Activated CD4-positive, alpha-beta T cell treated with anti-CD3 and anti-CD28 coated beads for 36 hours (primary cell): ENCODE measurements at regions of chr10 and their contacts with region 1.

Region 1: DNA sequence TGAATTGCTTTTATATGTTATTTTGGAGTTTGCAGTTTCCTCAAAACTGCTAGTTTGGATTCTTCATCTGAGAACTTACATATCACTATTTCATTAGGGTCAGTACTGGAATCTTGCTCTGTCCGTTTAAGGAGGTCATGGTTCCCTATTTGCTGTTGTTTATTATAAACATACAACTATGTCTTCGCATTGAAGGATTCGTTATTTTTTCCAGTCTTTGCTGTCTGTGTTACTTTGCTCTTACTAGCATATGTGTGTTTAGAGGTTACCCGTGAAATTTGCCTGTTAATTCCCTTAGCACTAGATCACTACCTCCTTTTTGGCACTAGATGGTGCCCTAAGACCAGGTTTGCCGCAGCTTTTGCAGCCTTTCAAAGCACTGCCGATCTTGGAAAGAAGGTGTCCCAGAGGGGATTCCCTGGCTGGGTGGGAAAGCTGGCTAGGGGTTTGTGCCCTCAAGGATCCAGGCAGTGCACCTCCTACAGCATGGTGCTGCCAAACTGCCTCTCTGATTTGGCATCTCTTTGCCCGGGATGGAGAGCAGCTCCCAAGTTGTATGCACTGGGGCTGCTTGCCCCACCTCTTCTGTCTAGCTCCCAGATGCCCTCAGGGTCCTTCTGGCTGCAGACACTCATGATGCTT is 103.1 kb upstream of the APBB1IP start:
- DNase-seq: peak; percentile 73
- ATAC-seq: peak; percentile 95
- H3K4me3 Mint-ChIP-seq: peak overlapping the region; percentile 60
- H3K27ac Mint-ChIP-seq: peak overlapping the region; percentile 68
- H3K4me1 Mint-ChIP-seq: peaks cover 10% of the 10 kb centered on the region
- H3K27me3 Mint-ChIP-seq: no peaks in the 10 kb centered on the region

Region 2: DNA sequence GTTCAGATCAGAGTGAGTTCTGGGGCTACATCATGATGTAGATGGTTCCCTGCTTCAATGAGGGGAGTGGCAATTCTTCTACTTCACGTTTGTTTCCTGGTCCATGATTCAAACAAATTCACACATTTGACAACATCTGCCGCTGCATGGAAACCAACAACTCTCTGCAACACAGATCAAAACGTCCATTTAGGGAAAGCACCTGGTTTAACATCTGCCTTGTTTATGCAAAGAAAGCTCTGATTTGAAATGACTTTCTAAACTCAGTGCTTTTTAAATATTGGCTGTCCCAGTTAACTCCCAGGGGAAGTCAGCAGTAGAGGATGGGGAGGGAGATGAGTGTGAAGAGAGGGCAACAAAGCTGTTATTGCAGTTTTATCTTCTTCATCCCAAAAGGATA is 24.7 kb before region 1 on chr10:
- CTCF ChIA-PET with region 1: no interaction called
- POLR2A ChIA-PET with region 1: no interaction called
- intact Hi-C with region 1: no loop called
- DNase-seq: no peak
- ATAC-seq: no peak
- H3K4me3 Mint-ChIP-seq: no peak overlapping the region
- H3K27ac Mint-ChIP-seq: no peak overlapping the region
- H3K4me1 Mint-ChIP-seq: no peaks in the 10 kb centered on the region
- H3K27me3 Mint-ChIP-seq: peaks cover 21% of the 10 kb centered on the region

Region 3: GRCh38 chr10:26437637-26438461 is 102.8 kb after region 1 on chr10 and contains the start of gene APBB1IP:
- CTCF ChIA-PET with region 1: interaction called, 6 read pairs
- POLR2A ChIA-PET with region 1: no interaction called
- intact Hi-C with region 1: loop called in 1 of 2 experiments (anchors 5 kb)
- DNase-seq: peak; percentile 73
- ATAC-seq: peak; percentile 56
- H3K4me3 Mint-ChIP-seq: peak within 1 kb of the TSS; percentile 89
- H3K27ac Mint-ChIP-seq: peak within 1 kb of the TSS; percentile 97
- H3K4me1 Mint-ChIP-seq: peaks cover 49% of the 10 kb centered on the region
- H3K27me3 Mint-ChIP-seq: no peaks in the 10 kb centered on the region
- total RNA-seq, gene APBB1IP: 53.3 to 66.4 TPM

Region 4: DNA sequence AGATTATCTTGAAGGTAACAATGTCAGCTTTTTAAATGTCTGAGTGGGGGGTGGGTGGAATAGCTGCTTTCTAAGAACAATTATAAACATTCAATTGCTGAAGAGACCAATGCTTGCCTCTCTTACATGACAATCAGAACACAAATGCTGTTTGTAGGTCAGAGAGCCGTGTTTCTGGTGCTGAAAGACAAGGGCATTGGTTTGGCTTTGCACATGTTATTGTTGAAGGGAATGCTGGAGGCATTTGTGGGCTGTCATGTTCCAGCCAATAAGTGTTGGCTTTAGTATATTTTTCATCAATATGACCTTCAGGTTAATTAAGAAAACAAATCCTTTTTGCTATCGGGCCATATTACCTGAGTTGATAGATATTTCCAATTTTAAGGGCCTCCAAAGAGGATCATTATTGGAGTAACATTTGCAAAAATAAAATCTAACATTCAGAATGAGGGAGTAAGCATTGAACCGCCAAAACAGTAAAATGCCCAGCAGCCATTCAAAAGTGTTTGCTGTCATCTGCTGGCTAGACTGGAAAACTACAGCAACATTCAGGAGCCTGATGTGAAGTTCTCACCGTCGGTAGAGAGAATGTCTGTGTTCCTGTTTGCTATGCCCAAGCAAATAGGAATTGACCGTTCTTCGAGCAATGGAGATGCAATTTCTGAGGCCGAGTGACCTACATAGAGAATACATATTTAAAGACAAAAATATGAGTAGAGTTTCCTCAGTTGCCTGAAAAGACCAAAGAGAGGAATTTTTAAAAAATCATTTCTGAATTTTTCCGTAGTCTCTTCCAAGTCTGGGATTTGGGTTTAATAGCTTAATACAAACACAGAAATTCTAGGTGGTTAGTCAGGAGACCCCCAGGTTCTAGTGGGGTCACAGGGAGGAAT is 221.9 kb after region 1 on chr10:
- CTCF ChIA-PET with region 1: interaction called, 105 read pairs
- POLR2A ChIA-PET with region 1: no interaction called
- intact Hi-C with region 1: loop called (anchors 1 kb)
- DNase-seq: peak; percentile 44
- ATAC-seq: peak; percentile 53
- H3K4me3 Mint-ChIP-seq: no peak overlapping the region
- H3K27ac Mint-ChIP-seq: no peak overlapping the region
- H3K4me1 Mint-ChIP-seq: peaks cover 5% of the 10 kb centered on the region
- H3K27me3 Mint-ChIP-seq: no peaks in the 10 kb centered on the region

Region 5: GRCh38 chr10:26682931-26683330 is 347.9 kb after region 1 on chr10:
- CTCF ChIA-PET with region 1: no interaction called
- POLR2A ChIA-PET with region 1: no interaction called
- intact Hi-C with region 1: loop called in 1 of 2 experiments (anchors 5 kb)
- DNase-seq: no peak
- ATAC-seq: no peak
- H3K4me3 Mint-ChIP-seq: no peak overlapping the region
- H3K27ac Mint-ChIP-seq: peak overlapping the region; percentile 63
- H3K4me1 Mint-ChIP-seq: peaks cover 27% of the 10 kb centered on the region
- H3K27me3 Mint-ChIP-seq: no peaks in the 10 kb centered on the region

Region 6: DNA sequence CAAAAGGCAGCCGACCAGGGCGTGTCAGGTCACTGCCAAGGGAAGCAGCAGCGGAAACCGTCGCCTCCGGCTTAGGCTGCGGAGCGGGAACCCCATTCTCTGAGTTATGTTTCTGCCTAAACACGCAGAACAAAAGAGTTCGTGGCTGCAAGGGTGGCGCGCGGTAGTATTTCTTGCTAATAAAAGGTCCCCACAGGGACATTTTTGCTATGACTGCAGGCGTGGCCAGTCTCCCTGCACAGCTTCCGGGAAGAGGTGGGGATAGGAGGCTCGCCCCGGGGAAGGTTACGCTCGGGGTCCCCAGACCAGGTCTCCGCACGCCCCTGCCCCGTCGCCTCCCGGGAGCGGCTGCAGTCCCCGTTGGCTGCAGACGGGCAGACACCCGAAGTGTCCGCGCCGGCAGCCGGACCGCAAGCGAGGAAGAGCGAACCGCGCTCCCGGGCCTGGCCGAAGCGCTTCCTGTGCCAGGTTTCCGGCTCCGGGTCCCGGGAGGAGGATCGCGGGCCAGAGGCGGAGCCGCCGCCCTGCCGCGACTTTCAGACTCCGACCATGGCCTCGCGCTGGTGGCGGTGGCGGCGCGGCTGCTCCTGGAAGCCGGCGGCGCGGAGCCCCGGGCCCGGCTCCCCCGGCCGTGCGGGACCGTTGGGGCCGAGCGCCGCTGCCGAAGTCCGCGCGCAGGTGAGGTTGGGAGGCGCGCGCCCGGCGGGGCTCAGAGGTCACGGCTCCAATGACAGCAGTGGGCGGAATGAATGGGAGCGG is 362.3 kb after region 1 on chr10 and contains the start of gene PDSS1:
- CTCF ChIA-PET with region 1: no interaction called
- POLR2A ChIA-PET with region 1: no interaction called
- intact Hi-C with region 1: loop called (anchors 2 to 10 kb)
- DNase-seq: peak; percentile 79
- ATAC-seq: peak; percentile 78
- H3K4me3 Mint-ChIP-seq: peak within 1 kb of the TSS; percentile 91
- H3K27ac Mint-ChIP-seq: peak within 1 kb of the TSS; percentile 95
- H3K4me1 Mint-ChIP-seq: peaks cover 32% of the 10 kb centered on the region
- H3K27me3 Mint-ChIP-seq: no peaks in the 10 kb centered on the region
- total RNA-seq, gene PDSS1: 16.1 to 20.7 TPM

Region 7: GRCh38 chr10:26881600-26882331 is 546.7 kb after region 1 on chr10:
- CTCF ChIA-PET with region 1: interaction called, 5 read pairs
- POLR2A ChIA-PET with region 1: no interaction called
- intact Hi-C with region 1: loop called (anchors 1 kb)
- DNase-seq: no peak
- ATAC-seq: peak; percentile 95
- H3K4me3 Mint-ChIP-seq: no peak overlapping the region
- H3K27ac Mint-ChIP-seq: no peak overlapping the region
- H3K4me1 Mint-ChIP-seq: no peaks in the 10 kb centered on the region
- H3K27me3 Mint-ChIP-seq: peaks cover 8% of the 10 kb centered on the region

Region 8: GRCh38 chr10:27360581-27361172 is 1025.6 kb after region 1 on chr10:
- CTCF ChIA-PET with region 1: no interaction called
- POLR2A ChIA-PET with region 1: no interaction called
- intact Hi-C with region 1: loop called in 1 of 2 experiments (anchors 10 kb)
- DNase-seq: peak; percentile 91
- ATAC-seq: peak; percentile 96
- H3K4me3 Mint-ChIP-seq: no peak overlapping the region
- H3K27ac Mint-ChIP-seq: no peak overlapping the region
- H3K4me1 Mint-ChIP-seq: peaks cover 3% of the 10 kb centered on the region
- H3K27me3 Mint-ChIP-seq: no peaks in the 10 kb centered on the region